Caco-2 (cell line): ENCODE measurements at regions of chr11 and their contacts with region 1.

Region 1: DNA sequence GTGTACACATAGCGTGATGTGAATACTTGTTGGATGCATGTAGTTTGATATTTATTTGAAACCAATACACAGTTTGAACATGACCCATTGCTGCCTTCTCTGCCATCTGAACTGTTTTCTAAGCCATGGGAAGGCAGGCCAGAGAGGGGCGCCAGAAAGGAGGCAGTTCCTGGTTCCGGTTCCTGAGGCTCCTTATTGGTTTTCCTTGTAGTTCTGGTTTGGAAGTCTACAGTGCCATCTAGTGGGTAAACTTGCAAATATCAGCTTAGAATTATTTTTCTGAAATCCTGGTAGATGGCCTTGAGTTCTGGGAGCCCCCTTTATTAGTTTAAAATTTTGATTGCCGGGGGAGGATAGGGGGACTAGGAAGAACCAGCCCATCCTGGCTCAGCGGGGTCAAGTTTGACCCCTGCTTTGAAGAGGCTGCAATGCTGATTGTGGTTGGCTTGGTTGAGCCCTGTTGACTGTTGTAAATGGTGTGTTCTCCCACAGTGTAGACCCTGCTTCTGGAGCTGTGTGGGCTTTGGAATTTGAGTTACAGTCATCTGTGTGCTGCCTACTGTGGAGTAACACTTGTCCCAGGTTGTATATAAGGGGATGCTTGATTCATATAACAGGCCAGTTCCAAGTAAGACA is 48.4 kb downstream of the GRAMD1B start:
- DNase-seq: peak; percentile 71 to 77
- H3K4me3 ChIP-seq: no peak overlapping the region
- H3K4me3 Mint-ChIP-seq: no peak overlapping the region
- H3K27ac Mint-ChIP-seq: no peak overlapping the region
- H3K4me1 ChIP-seq: no peaks in the 10 kb centered on the region
- H3K4me1 Mint-ChIP-seq: no peaks in the 10 kb centered on the region
- H3K27me3 ChIP-seq: peaks cover 3% of the 10 kb centered on the region; the same call in 1 of the 2 replicates
- H3K27me3 Mint-ChIP-seq: peaks cover 18% of the 10 kb centered on the region
- CTCF ChIP-seq: peak; percentile 86 to 87

Region 2: DNA sequence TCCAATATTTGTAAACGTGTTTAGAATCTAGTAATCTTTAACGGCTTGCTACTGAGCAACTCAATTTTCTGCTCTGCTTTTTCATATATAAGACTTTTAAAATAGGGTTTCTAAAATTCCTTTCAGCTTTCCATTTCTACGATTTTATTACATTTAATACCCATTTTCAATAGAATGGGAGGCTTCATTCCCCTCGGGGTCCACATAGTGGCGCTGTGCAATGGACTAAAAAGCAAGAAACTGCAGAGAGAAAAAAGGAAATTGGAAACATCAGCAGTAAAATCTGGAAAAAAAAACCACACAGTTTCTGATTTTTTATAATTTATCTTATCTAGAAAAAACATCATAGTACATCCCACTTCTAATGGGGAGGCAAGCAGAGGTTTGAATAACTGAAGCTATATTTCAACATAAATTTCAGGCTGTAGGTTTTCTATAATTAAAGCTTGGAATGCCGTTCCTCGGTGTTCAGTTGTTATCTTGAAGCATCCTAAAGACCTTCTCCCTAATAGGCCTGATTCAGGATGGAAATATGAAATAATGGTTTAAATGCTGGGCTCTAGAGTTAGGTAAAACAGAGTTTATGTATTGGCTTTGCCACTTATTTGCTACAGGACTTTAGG is 614.7 kb before region 1 on chr11:
- CTCF ChIA-PET with region 1: interaction called, 4 read pairs
- POLR2A ChIA-PET with region 1: no interaction called
- intact Hi-C with region 1: loop called (anchors 10 kb)
- DNase-seq: peak; percentile 28 to 65
- H3K4me3 ChIP-seq: no peak overlapping the region
- H3K4me3 Mint-ChIP-seq: no peak overlapping the region
- H3K27ac Mint-ChIP-seq: no peak overlapping the region
- H3K4me1 ChIP-seq: peaks cover 8% of the 10 kb centered on the region; the same call in 1 of the 2 replicates
- H3K4me1 Mint-ChIP-seq: no peaks in the 10 kb centered on the region
- H3K27me3 ChIP-seq: no peaks in the 10 kb centered on the region
- H3K27me3 Mint-ChIP-seq: peaks cover 43% of the 10 kb centered on the region
- CTCF ChIP-seq: peak; percentile 89 to 97

Region 3: GRCh38 chr11:123103326-123103980 is 375.0 kb before region 1 on chr11:
- CTCF ChIA-PET with region 1: interaction called, 9 read pairs
- POLR2A ChIA-PET with region 1: no interaction called
- intact Hi-C with region 1: loop called (anchors 1 kb)
- DNase-seq: peak; percentile 53 to 69
- H3K4me3 ChIP-seq: no peak overlapping the region
- H3K4me3 Mint-ChIP-seq: no peak overlapping the region
- H3K27ac Mint-ChIP-seq: no peak overlapping the region
- H3K4me1 ChIP-seq: peaks cover 10% of the 10 kb centered on the region
- H3K4me1 Mint-ChIP-seq: peaks cover 10% of the 10 kb centered on the region
- H3K27me3 ChIP-seq: no peaks in the 10 kb centered on the region
- H3K27me3 Mint-ChIP-seq: no peaks in the 10 kb centered on the region
- CTCF ChIP-seq: peak; percentile 83 to 91

Region 4: GRCh38 chr11:123301696-123302400 is 176.6 kb before region 1 on chr11:
- CTCF ChIA-PET with region 1: interaction called, 4 read pairs
- POLR2A ChIA-PET with region 1: no interaction called
- intact Hi-C with region 1: loop called (anchors 1 kb)
- DNase-seq: peak; percentile 62 to 84
- H3K4me3 ChIP-seq: peak overlapping the region; percentile 9; the same call in 1 of the 2 replicates
- H3K4me3 Mint-ChIP-seq: peak overlapping the region; percentile 9
- H3K27ac Mint-ChIP-seq: no peak overlapping the region
- H3K4me1 ChIP-seq: no peaks in the 10 kb centered on the region
- H3K4me1 Mint-ChIP-seq: no peaks in the 10 kb centered on the region
- H3K27me3 ChIP-seq: peaks cover 6% of the 10 kb centered on the region
- H3K27me3 Mint-ChIP-seq: peaks cover 26% of the 10 kb centered on the region
- CTCF ChIP-seq: peak; percentile 80 to 95

Region 5: GRCh38 chr11:123517559-123518364 is 39.3 kb after region 1 on chr11:
- CTCF ChIA-PET with region 1: no interaction called
- POLR2A ChIA-PET with region 1: no interaction called
- intact Hi-C with region 1: no loop called
- DNase-seq: peak in 1 of 2 experiments; percentile 11
- H3K4me3 ChIP-seq: no peak overlapping the region
- H3K4me3 Mint-ChIP-seq: no peak overlapping the region
- H3K27ac Mint-ChIP-seq: no peak overlapping the region
- H3K4me1 ChIP-seq: no peaks in the 10 kb centered on the region
- H3K4me1 Mint-ChIP-seq: no peaks in the 10 kb centered on the region
- H3K27me3 ChIP-seq: peaks cover 8% of the 10 kb centered on the region
- H3K27me3 Mint-ChIP-seq: peaks cover 36% of the 10 kb centered on the region
- CTCF ChIP-seq: no peak

Region 6: GRCh38 chr11:123536690-123537437 is 58.4 kb after region 1 on chr11:
- CTCF ChIA-PET with region 1: no interaction called
- POLR2A ChIA-PET with region 1: no interaction called
- intact Hi-C with region 1: no loop called
- DNase-seq: peak in 1 of 2 experiments; percentile 7
- H3K4me3 ChIP-seq: no peak overlapping the region
- H3K4me3 Mint-ChIP-seq: no peak overlapping the region
- H3K27ac Mint-ChIP-seq: no peak overlapping the region
- H3K4me1 ChIP-seq: no peaks in the 10 kb centered on the region
- H3K4me1 Mint-ChIP-seq: no peaks in the 10 kb centered on the region
- H3K27me3 ChIP-seq: no peaks in the 10 kb centered on the region
- H3K27me3 Mint-ChIP-seq: peaks cover 30% of the 10 kb centered on the region
- CTCF ChIP-seq: no peak